Heart left ventricle (tissue), 16 donors: ENCODE measurements at regions of chr1 and their contacts with region 1.

Region 1: GRCh38 chr1:220380885-220381284 is 108.6 kb upstream of the RAB3GAP2 start:
- DNase-seq: no peak
- ATAC-seq: no peak
- H3K4me3 ChIP-seq: no peak overlapping the region
- H3K27ac ChIP-seq: no peak overlapping the region
- H3K4me1 ChIP-seq: no peaks in the 10 kb centered on the region
- H3K27me3 ChIP-seq: no peaks in the 10 kb centered on the region
- CTCF ChIP-seq: no peak
- POLR2A ChIP-seq: no peak

Region 2: DNA sequence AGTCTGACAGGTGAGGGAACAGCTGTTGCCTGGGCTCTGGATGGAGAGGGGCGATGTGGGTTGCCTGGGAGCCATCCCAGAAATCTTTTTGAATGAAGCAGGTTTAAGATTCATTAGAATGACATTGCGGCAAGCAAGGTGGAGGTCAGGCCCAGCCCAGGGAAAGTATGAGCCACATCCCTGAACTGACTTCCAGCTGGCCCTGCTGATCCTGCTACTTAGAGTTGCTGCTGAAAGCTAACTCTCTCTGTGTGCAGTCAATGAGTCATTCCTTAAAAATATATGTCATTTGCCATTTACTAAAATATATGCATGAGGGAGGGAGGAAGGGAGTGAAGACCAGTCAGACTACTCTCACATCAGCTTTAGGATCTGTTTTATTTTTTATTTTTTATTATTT is 54.3 kb before region 1 on chr1:
- intact Hi-C with region 1: loop called in 1 of 10 experiments (anchors 10 kb)
- DNase-seq: peak in 1 of 5 donors; percentile 35
- ATAC-seq: peak in 3 of 4 donors; percentile 63 to 84 (median 68)
- H3K4me3 ChIP-seq: no peak overlapping the region
- H3K27ac ChIP-seq: no peak overlapping the region
- H3K4me1 ChIP-seq: peaks cover 0 to 10% (median 0%) of the 10 kb centered on the region in 12 donors
- H3K27me3 ChIP-seq: no peaks in the 10 kb centered on the region
- CTCF ChIP-seq: no peak
- POLR2A ChIP-seq: no peak

Region 3: GRCh38 chr1:220500372-220500771 is 119.5 kb after region 1 on chr1:
- intact Hi-C with region 1: loop called in 1 of 10 experiments (anchors 10 kb)
- DNase-seq: no peak
- ATAC-seq: no peak
- H3K4me3 ChIP-seq: no peak overlapping the region
- H3K27ac ChIP-seq: no peak overlapping the region
- H3K4me1 ChIP-seq: no peaks in the 10 kb centered on the region
- H3K27me3 ChIP-seq: peaks cover 0 to 1% (median 0%) of the 10 kb centered on the region in 9 donors
- CTCF ChIP-seq: no peak
- POLR2A ChIP-seq: no peak